ENCODE measurements at regions of chr10 and their contacts with region 1.

Region 1: DNA sequence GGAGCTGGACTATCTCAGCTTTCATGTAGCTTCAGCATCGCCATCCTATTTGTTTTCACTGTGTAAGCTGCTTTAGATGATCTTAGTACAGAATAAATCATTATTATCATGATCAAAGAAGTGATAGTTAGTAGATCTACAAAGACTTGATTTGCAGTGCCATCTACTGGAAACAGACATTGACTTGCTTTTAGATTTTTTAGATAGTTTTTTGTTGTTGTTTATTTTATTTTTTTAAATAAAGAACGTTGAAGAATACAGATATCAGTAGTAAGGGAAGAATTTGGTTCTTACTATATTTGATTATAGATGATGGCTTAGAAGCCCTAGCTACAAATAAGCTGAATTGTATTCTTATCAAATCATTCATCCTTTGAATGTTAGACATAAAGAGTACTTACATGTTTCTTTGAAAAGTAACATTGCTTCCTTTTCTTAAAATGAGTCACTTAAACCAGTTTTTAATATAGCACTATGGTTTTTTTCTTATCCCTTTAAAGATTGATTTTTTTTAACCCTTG is 6.3 kb upstream of the SFMBT2 start:
- DNase-seq: no peak
- ATAC-seq: peak; percentile 17

Region 2: GRCh38 chr10:6918305-6918704 is 498.9 kb before region 1 on chr10:
- intact Hi-C with region 1: loop called (anchors 5 kb)
- DNase-seq: no peak
- ATAC-seq: no peak

Region 3: DNA sequence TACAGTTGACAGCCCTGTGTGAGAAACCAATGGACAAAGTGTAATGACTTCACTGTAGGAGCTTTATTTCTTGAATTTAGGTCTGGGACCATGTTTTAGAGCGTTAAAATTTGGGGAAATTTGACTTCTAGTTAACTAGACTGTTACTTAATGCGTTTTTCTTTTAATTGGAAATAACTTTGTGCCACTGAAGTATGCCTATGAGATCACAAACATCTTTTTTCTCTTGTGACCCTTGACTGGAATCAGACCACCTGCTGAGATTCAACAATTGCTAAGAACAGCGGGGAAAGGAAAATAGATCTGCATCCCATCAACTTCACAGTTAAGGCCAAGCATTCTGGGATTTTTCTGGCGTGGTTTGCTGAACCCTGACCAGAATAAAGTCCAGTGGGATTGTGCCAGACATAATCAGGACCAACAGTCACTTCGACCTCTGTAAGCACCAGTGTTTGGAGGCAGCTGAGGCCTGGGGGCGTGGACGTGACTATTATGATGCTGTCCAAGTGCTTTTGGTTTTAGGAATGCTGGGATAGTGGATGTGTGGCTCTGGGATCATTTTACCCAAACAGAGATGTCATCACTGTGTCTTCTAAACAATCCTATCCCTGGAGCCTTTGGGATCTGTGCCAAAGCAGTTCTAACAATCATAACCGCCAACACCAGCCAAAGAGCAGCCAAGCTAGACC is 463.9 kb before region 1 on chr10:
- intact Hi-C with region 1: no loop called
- DNase-seq: peak; percentile 64
- ATAC-seq: peak; percentile 53

Region 4: GRCh38 chr10:7121154-7121810 is 295.9 kb before region 1 on chr10:
- intact Hi-C with region 1: loop called (anchors 5 kb)
- DNase-seq: peak; percentile 63
- ATAC-seq: peak; percentile 87

Measured in Right ventricle myocardium superior (tissue), 1 donor.